Mammary epithelial cell (primary cell): ENCODE measurements at regions of chr12 and their contacts with region 1.

Region 1: GRCh38 chr12:14810953-14811483 is 3.0 kb downstream of the SMCO3 start:
- DNase-seq: peak; percentile 19
- H3K4me3 ChIP-seq: no peak overlapping the region
- H3K27ac ChIP-seq: no peak overlapping the region
- H3K4me1 ChIP-seq: no peaks in the 10 kb centered on the region
- H3K27me3 ChIP-seq: no peaks in the 10 kb centered on the region
- CTCF ChIP-seq: peak; percentile 65 to 85

Region 2: GRCh38 chr12:14656846-14657245 is 154.2 kb before region 1 on chr12:
- CTCF ChIA-PET with region 1: no interaction called
- dilution Hi-C with region 1: no loop called
- in situ Hi-C with region 1: no loop called
- intact Hi-C with region 1: no loop called
- DNase-seq: no peak
- H3K4me3 ChIP-seq: no peak overlapping the region
- H3K27ac ChIP-seq: no peak overlapping the region
- H3K4me1 ChIP-seq: no peaks in the 10 kb centered on the region
- H3K27me3 ChIP-seq: no peaks in the 10 kb centered on the region
- CTCF ChIP-seq: no peak

Region 3: GRCh38 chr12:14723763-14724162 is 87.3 kb before region 1 on chr12:
- CTCF ChIA-PET with region 1: no interaction called
- dilution Hi-C with region 1: no loop called
- in situ Hi-C with region 1: no loop called
- intact Hi-C with region 1: loop called (anchors 10 kb)
- DNase-seq: peak; percentile 41
- H3K4me3 ChIP-seq: no peak overlapping the region
- H3K27ac ChIP-seq: no peak overlapping the region
- H3K4me1 ChIP-seq: no peaks in the 10 kb centered on the region
- H3K27me3 ChIP-seq: no peaks in the 10 kb centered on the region
- CTCF ChIP-seq: peak; percentile 75 to 78

Region 4: DNA sequence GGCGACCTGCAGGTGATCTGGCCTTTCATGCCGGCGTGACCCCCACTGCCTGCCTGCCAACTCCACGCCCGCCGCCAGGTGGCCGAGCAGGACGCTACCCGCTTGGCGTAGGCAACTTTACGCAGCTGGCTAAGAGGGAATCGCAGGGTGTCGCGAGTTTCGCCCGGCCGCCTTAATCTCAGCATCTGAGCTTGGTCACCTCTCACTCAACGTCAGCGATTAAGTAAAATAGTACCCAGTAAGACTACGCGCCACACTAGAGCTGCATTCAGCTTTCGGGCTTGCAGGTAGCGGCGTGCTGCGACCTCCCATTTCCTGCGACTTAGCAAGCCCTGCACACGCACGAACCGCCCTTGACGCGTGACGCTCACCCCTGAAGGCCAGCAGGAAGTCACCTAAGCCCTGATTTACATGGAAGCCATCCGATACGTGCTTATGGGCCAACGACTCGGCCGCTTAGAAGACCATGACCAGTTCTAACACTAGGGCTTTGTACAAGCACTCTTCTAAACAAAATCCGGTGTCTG is 41.0 kb before region 1 on chr12:
- CTCF ChIA-PET with region 1: no interaction called
- dilution Hi-C with region 1: no loop called
- in situ Hi-C with region 1: no loop called
- intact Hi-C with region 1: no loop called
- DNase-seq: peak; percentile 83
- H3K4me3 ChIP-seq: peak overlapping the region; percentile 64 to 96 (median 77)
- H3K27ac ChIP-seq: peak overlapping the region; percentile 90
- H3K4me1 ChIP-seq: peaks cover 9% of the 10 kb centered on the region
- H3K27me3 ChIP-seq: no peaks in the 10 kb centered on the region
- CTCF ChIP-seq: peak; percentile 65 to 89

Region 5: DNA sequence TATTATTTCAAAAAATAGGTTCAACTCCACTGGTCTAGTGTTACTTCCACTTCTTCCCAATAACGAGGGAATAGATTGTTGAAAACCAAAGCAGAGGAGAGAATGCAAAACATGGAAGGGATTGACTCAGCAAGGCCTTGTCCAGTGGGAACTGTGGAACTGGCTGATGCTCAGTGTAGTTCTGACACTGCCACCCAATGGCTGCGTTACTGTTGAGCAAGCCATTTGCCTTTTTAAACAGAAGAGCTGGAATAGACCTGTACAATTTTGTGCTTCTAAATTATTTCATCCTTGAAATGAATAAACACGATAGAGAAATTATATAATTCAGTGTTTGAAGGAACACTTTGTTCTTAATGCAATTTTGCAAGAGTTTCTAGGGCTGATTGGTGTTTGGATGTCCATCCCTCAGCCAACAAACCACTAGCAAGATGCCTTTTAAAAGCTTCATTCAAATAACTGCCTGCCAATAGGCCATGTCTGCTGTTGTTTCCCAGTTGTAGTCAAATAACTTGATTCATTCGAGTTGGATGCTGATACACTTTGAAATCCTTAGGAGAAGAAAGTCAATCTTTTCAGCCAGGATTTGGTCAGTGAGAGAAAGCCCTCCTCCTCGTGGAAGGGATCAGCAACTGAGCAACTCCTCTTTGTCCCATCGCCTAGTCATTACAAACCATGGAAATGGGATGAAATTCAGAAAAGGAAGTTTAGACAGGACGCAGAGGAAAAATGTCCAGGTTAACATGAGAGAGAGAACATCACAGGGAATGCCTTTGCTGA is 81.9 kb after region 1 on chr12:
- CTCF ChIA-PET with region 1: interaction called, 4 read pairs
- dilution Hi-C with region 1: no loop called
- in situ Hi-C with region 1: no loop called
- intact Hi-C with region 1: loop called (anchors 1 kb)
- DNase-seq: no peak
- H3K4me3 ChIP-seq: no peak overlapping the region
- H3K27ac ChIP-seq: no peak overlapping the region
- H3K4me1 ChIP-seq: no peaks in the 10 kb centered on the region
- H3K27me3 ChIP-seq: no peaks in the 10 kb centered on the region
- CTCF ChIP-seq: peak in 1 of 2 donors; percentile 33